OCI-LY7 (cell line): ENCODE measurements at regions of chr7 and their contacts with region 1.

Region 1: GRCh38 chr7:73433924-73434700 is 534 bp downstream of the FZD9 start:
- DNase-seq: no peak
- H3K4me3 ChIP-seq: peak overlapping the region; percentile 57
- H3K27ac ChIP-seq: no peak overlapping the region
- H3K4me1 ChIP-seq: no peaks in the 10 kb centered on the region
- CTCF ChIP-seq: no peak

Region 2: GRCh38 chr7:73329861-73330581 is 104.1 kb before region 1 on chr7:
- CTCF ChIA-PET with region 1: no interaction called
- POLR2A ChIA-PET with region 1: no interaction called
- intact Hi-C with region 1: loop called (anchors 10 kb)
- DNase-seq: no peak
- H3K4me3 ChIP-seq: no peak overlapping the region
- H3K27ac ChIP-seq: no peak overlapping the region
- H3K4me1 ChIP-seq: no peaks in the 10 kb centered on the region
- CTCF ChIP-seq: no peak

Region 3: GRCh38 chr7:73351447-73352167 is 82.5 kb before region 1 on chr7:
- CTCF ChIA-PET with region 1: no interaction called
- POLR2A ChIA-PET with region 1: no interaction called
- intact Hi-C with region 1: no loop called
- DNase-seq: no peak
- H3K4me3 ChIP-seq: no peak overlapping the region
- H3K27ac ChIP-seq: no peak overlapping the region
- H3K4me1 ChIP-seq: no peaks in the 10 kb centered on the region
- CTCF ChIP-seq: no peak

Region 4: GRCh38 chr7:73364006-73364728 is 69.9 kb before region 1 on chr7:
- CTCF ChIA-PET with region 1: no interaction called
- POLR2A ChIA-PET with region 1: no interaction called
- intact Hi-C with region 1: no loop called
- DNase-seq: no peak
- H3K4me3 ChIP-seq: no peak overlapping the region
- H3K27ac ChIP-seq: no peak overlapping the region
- H3K4me1 ChIP-seq: no peaks in the 10 kb centered on the region
- CTCF ChIP-seq: no peak